Ascending aorta (tissue), 2 donors: ENCODE measurements at regions of chr19 and their contacts with region 1.

Region 1: DNA sequence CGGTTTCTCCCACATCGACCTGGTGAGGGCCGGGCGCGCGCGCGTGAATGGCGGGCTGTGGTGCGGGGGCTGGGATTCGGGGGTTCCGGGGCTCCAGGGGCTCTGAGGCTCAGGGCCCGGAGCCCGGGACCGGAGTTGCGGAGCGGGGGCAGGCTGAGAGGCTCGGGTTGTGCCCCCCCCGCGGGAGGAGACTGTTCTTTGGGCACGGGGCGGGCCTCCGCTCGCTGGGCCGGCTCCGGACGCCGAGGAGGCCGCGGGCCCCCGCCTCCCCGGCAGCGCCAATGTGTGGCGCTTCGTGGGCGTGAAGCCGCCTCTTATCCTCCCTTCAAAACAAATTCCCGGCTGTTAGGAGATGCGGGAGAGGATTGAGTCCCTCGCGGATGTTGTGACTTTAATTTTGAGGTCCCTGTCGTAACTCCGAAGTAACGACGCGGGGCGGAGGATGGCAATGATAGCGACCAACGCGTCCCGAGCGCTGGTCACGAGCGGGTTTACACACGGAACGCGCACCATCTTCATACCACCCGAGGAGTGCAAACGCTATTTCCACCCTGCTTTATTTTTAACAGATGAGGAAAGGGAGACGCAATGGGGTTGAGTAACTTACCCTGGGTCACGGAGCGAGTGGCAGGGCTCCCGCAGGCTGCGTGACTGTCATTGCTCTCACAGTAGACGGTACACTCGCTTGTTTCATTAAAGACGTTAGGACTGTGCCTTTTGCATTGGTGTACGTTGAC is 536 bp downstream of the UBA2 start:
- DNase-seq: peak in 1 of 2 donors; percentile 71
- H3K4me3 ChIP-seq: peak overlapping the region; percentile 75 to 88
- H3K27ac ChIP-seq: peak overlapping the region; percentile 93 to 99
- H3K4me1 ChIP-seq: peaks cover 8 to 40% of the 10 kb centered on the region in 2 donors
- H3K27me3 ChIP-seq: no peaks in the 10 kb centered on the region
- CTCF ChIP-seq: no peak

Region 2: GRCh38 chr19:33860312-33861090 is 568.2 kb before region 1 on chr19:
- intact Hi-C with region 1: no loop called
- DNase-seq: peak in 1 of 2 donors; percentile 28
- H3K4me3 ChIP-seq: no peak overlapping the region
- H3K27ac ChIP-seq: no peak overlapping the region
- H3K4me1 ChIP-seq: no peaks in the 10 kb centered on the region
- H3K27me3 ChIP-seq: no peaks in the 10 kb centered on the region
- CTCF ChIP-seq: no peak

Region 3: GRCh38 chr19:34404109-34404897 is 24.4 kb before region 1 on chr19 and contains the start of gene PDCD2L:
- intact Hi-C with region 1: loop called (anchors 2 kb)
- DNase-seq: peak; percentile 53 to 95
- H3K4me3 ChIP-seq: peak within 1 kb of the TSS; percentile 77 to 93
- H3K27ac ChIP-seq: peak within 1 kb of the TSS; percentile 20 to 43
- H3K4me1 ChIP-seq: peaks cover 3 to 7% of the 10 kb centered on the region in 2 donors
- H3K27me3 ChIP-seq: no peaks in the 10 kb centered on the region
- CTCF ChIP-seq: no peak
- total RNA-seq, gene PDCD2L: 30.0 TPM

Region 4: GRCh38 chr19:34461375-34462100 is 32.8 kb after region 1 on chr19:
- intact Hi-C with region 1: loop called (anchors 2 kb)
- DNase-seq: peak in 1 of 2 donors; percentile 71
- H3K4me3 ChIP-seq: peak overlapping the region in 1 of 2 donors; percentile 21
- H3K27ac ChIP-seq: peak overlapping the region; percentile 82 to 89
- H3K4me1 ChIP-seq: peaks cover 22 to 53% of the 10 kb centered on the region in 2 donors
- H3K27me3 ChIP-seq: no peaks in the 10 kb centered on the region
- CTCF ChIP-seq: no peak